Prostate gland (tissue), 2 donors: ENCODE measurements at regions of chr18 and their contacts with region 1.

Region 1: DNA sequence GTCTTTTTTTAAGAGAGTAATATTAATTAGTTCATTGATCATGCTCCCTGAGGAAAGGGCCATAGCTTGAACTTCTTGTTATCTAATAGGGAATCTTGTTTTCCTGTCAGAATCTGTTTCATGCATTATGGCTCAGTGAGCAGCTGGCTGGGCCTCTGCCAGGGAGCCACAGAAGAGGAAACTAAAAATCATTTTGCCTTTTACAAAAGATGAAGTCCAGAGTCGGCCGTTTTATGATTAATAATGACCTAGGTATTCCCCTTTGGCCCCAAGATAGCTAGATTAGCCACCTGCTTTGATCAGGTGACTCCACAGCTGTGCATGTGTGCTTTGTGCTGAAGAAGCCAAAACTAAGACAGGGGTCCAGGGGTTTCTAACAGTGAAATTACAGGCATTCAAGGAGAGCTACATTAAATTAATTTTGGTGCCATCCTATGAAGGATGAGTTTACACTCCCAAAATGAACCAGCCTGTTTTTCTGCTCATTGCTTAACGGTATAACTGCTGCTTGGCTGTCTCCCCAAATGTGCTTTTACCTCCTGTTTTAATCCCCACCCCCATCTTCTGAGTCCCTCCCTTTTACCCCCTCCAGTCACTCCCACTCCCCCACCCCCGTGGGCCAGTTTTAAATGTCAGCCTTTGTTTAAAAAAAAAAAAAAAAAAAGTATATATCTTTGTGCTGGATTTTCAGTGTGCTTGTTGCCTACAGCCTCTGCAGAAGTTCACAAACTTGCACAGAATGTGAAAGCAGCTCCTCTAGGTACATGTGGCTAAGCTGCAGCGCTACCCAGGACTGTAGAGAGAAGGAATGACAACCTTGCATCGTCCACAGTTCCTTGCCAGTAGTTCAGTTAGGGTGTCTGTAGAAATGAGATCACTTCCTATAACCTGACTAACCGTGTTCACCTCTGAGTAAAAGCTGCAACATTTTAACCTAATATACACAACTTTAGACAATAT is 93.1 kb downstream of the CABLES1 start:
- DNase-seq: no peak
- H3K4me3 ChIP-seq: no peak overlapping the region
- H3K27ac ChIP-seq: no peak overlapping the region
- H3K4me1 ChIP-seq: no peaks in the 10 kb centered on the region
- H3K27me3 ChIP-seq: no peaks in the 10 kb centered on the region
- CTCF ChIP-seq: no peak
- POLR2A ChIP-seq: no peak

Region 2: GRCh38 chr18:23155537-23155936 is 72.8 kb before region 1 on chr18:
- intact Hi-C with region 1: loop called (anchors 5 kb)
- DNase-seq: no peak
- H3K4me3 ChIP-seq: no peak overlapping the region
- H3K27ac ChIP-seq: no peak overlapping the region
- H3K4me1 ChIP-seq: no peaks in the 10 kb centered on the region
- H3K27me3 ChIP-seq: no peaks in the 10 kb centered on the region
- CTCF ChIP-seq: no peak
- POLR2A ChIP-seq: no peak

Region 3: GRCh38 chr18:23356915-23357601 is 128.7 kb after region 1 on chr18:
- intact Hi-C with region 1: loop called (anchors 10 kb)
- DNase-seq: no peak
- H3K4me3 ChIP-seq: no peak overlapping the region
- H3K27ac ChIP-seq: no peak overlapping the region
- H3K4me1 ChIP-seq: no peaks in the 10 kb centered on the region
- H3K27me3 ChIP-seq: no peaks in the 10 kb centered on the region
- CTCF ChIP-seq: no peak
- POLR2A ChIP-seq: no peak